SK-N-SH (cell line): ENCODE measurements at regions of chr7 and their contacts with region 1.

Region 1: GRCh38 chr7:87628780-87629569 is 777 bp downstream of the RUNDC3B start:
- DNase-seq: peak; percentile 74
- H3K4me3 ChIP-seq: peak overlapping the region; percentile 70 to 83
- H3K27ac ChIP-seq: peak overlapping the region in 1 of 2 experiments; percentile 5; a peak in 1 of 4 replicates
- H3K4me1 ChIP-seq: peaks cover 0 to 8% of the 10 kb centered on the region in 2 experiments; a peak in 1 of 4 replicates
- H3K27me3 ChIP-seq: 0 out of 2 replicates have a peak, but pooled peaks cover 11% of the 10 kb centered on the region
- CTCF ChIP-seq: no peak
- EP300 ChIP-seq: no peak
- RAD21 ChIP-seq: no peak

Region 2: GRCh38 chr7:87600130-87601124 is 28.5 kb before region 1 on chr7 and contains the start of gene ABCB1:
- CTCF ChIA-PET with region 1: interaction called, 18 read pairs
- POLR2A ChIA-PET with region 1: interaction called, 13 read pairs
- DNase-seq: peak; percentile 91
- H3K4me3 ChIP-seq: peak within 1 kb of the TSS; percentile 68 to 75
- H3K27ac ChIP-seq: peak within 1 kb of the TSS in 1 of 2 experiments; percentile 99; a peak in 2 of 4 replicates
- H3K4me1 ChIP-seq: peaks cover 0 to 25% of the 10 kb centered on the region in 2 experiments; a peak in 2 of 4 replicates
- H3K27me3 ChIP-seq: peaks cover 13% of the 10 kb centered on the region
- CTCF ChIP-seq: no peak
- EP300 ChIP-seq: peak in 1 of 2 experiments; percentile 43; a peak in 2 of 4 replicates
- RAD21 ChIP-seq: peak; percentile 38
- polyA plus RNA-seq, gene ABCB1: 2.0 and 5.3 TPM in 2 replicates

Region 3: DNA sequence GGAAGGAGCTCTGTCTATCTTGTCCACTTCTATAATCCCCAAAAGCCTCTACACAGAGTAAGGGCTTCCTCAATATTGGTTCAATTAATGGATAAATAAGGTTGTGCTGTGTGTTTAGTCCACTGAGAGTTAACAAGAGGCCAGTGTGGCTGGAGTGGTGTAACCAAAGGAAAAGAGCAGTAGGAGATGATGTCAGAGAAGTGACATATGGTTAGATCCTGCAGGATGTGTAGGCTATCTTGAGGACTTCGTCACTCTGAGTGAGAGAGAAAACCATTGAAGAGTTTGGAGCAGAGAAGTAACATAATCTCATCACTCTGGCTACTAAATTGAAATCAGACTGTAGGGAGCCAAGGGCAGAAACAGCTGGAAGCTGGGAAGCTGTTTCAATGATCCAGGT is 13.8 kb before region 1 on chr7:
- CTCF ChIA-PET with region 1: interaction called, 20 read pairs
- POLR2A ChIA-PET with region 1: no interaction called
- DNase-seq: no peak
- H3K4me3 ChIP-seq: no peak overlapping the region
- H3K27ac ChIP-seq: no peak overlapping the region
- H3K4me1 ChIP-seq: no peaks in the 10 kb centered on the region
- H3K27me3 ChIP-seq: no peaks in the 10 kb centered on the region
- CTCF ChIP-seq: no peak
- EP300 ChIP-seq: no peak
- RAD21 ChIP-seq: no peak